SK-N-SH (cell line): ENCODE measurements at regions of chr6 and their contacts with region 1.

Region 1: GRCh38 chr6:35240840-35241801 is 18.4 kb upstream of the ZNF76 start:
- DNase-seq: peak; percentile 84
- H3K4me3 ChIP-seq: no peak overlapping the region; a peak in 1 of 4 replicates
- H3K27ac ChIP-seq: no peak overlapping the region
- H3K4me1 ChIP-seq: peaks cover 0 to 12% of the 10 kb centered on the region in 2 experiments; a peak in 1 of 4 replicates
- H3K27me3 ChIP-seq: no peaks in the 10 kb centered on the region
- CTCF ChIP-seq: peak; percentile 98
- EP300 ChIP-seq: no peak
- RAD21 ChIP-seq: peak; percentile 94

Region 2: GRCh38 chr6:34912715-34913464 is 328.2 kb before region 1 on chr6:
- CTCF ChIA-PET with region 1: no interaction called
- POLR2A ChIA-PET with region 1: no interaction called
- DNase-seq: no peak
- H3K4me3 ChIP-seq: no peak overlapping the region; a peak in 1 of 4 replicates
- H3K27ac ChIP-seq: 0 out of 4 replicates have a peak overlapping the region, but pooled peaks of 1 of the 2 experiments have one; percentile 17
- H3K4me1 ChIP-seq: peaks cover 0 to 25% of the 10 kb centered on the region in 2 experiments; a peak in 2 of 4 replicates
- H3K27me3 ChIP-seq: no peaks in the 10 kb centered on the region
- CTCF ChIP-seq: no peak
- EP300 ChIP-seq: no peak
- RAD21 ChIP-seq: no peak

Region 3: GRCh38 chr6:35146453-35146852 is 94.7 kb before region 1 on chr6:
- CTCF ChIA-PET with region 1: interaction called, 148 read pairs
- POLR2A ChIA-PET with region 1: no interaction called
- DNase-seq: peak; percentile 70
- H3K4me3 ChIP-seq: no peak overlapping the region
- H3K27ac ChIP-seq: no peak overlapping the region
- H3K4me1 ChIP-seq: peaks cover 0 to 12% of the 10 kb centered on the region in 2 experiments; a peak in 2 of 4 replicates
- H3K27me3 ChIP-seq: no peaks in the 10 kb centered on the region
- CTCF ChIP-seq: peak; percentile 71
- EP300 ChIP-seq: no peak
- RAD21 ChIP-seq: peak; percentile 80

Region 4: DNA sequence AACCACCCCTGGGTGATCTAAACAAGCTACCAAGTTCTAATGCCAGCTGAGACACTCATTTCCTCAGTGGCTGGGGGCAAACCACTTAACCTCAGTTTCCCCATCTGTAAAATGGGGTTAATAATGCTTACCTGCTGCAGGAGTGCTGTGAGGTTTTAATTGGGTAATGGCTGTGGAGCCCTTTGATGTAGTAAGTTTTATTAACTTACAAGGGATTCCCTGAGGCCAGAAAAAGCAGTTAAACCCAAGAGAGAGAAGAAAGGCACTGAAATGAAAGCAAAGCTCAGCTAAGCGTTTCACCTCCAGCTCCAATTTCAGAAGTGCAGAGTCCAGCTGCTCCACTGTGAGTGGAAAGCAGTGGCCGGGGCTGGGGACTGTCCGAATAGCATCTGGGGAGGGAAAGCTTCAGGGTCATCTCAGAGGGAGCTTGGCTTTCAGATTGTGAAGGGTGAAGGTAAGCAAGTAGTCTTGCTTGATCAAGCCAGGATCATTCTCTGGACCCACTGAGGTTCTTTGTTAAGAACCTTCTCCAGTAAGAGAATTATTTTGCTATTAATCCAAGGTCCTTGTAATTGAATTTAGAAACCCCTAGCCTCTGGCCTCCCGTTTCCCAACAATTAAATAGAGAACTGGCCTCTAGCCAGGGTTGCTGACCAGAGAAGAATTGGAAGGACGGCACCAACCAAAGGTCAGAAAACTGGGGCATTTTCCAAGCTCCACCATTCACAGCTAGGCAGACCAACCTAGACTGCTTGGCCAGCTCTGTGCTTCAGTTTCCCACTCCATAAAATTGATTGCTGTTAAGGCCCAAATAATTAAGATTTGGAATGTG is 79.1 kb before region 1 on chr6:
- CTCF ChIA-PET with region 1: interaction called, 19 read pairs
- POLR2A ChIA-PET with region 1: no interaction called
- DNase-seq: peak; percentile 34
- H3K4me3 ChIP-seq: no peak overlapping the region
- H3K27ac ChIP-seq: no peak overlapping the region
- H3K4me1 ChIP-seq: peaks cover 0 to 26% of the 10 kb centered on the region in 2 experiments; a peak in 2 of 4 replicates
- H3K27me3 ChIP-seq: no peaks in the 10 kb centered on the region
- CTCF ChIP-seq: no peak
- EP300 ChIP-seq: no peak
- RAD21 ChIP-seq: no peak

Region 5: GRCh38 chr6:35213824-35214756 is 27.0 kb before region 1 on chr6 and contains the start of gene SCUBE3:
- CTCF ChIA-PET with region 1: interaction called, 55 read pairs
- POLR2A ChIA-PET with region 1: no interaction called
- DNase-seq: peak; percentile 92
- H3K4me3 ChIP-seq: peak within 1 kb of the TSS; percentile 52 to 63
- H3K27ac ChIP-seq: no peak within 1 kb of the TSS
- H3K4me1 ChIP-seq: peaks cover 0 to 4% of the 10 kb centered on the region in 2 experiments; a peak in 1 of 4 replicates
- H3K27me3 ChIP-seq: no peaks in the 10 kb centered on the region
- CTCF ChIP-seq: no peak
- EP300 ChIP-seq: no peak
- RAD21 ChIP-seq: no peak
- polyA plus RNA-seq, gene SCUBE3: 1.8 and 2.0 TPM in 2 replicates

Region 6: GRCh38 chr6:35259194-35259947 is 18.2 kb after region 1 on chr6 and contains the start of gene ZNF76:
- CTCF ChIA-PET with region 1: interaction called, 54 read pairs
- POLR2A ChIA-PET with region 1: no interaction called
- DNase-seq: peak; percentile 99
- H3K4me3 ChIP-seq: peak within 1 kb of the TSS; percentile 80 to 95
- H3K27ac ChIP-seq: peak within 1 kb of the TSS; percentile 79 to 88
- H3K4me1 ChIP-seq: peaks cover 13 to 14% of the 10 kb centered on the region in 2 experiments; a peak in 3 of 4 replicates
- H3K27me3 ChIP-seq: no peaks in the 10 kb centered on the region
- CTCF ChIP-seq: no peak
- EP300 ChIP-seq: peak; percentile 35 to 70; a peak in 2 of 4 replicates
- RAD21 ChIP-seq: no peak
- polyA plus RNA-seq, gene ZNF76: 19.7 and 22.4 TPM in 2 replicates